Astrocyte of the spinal cord (primary cell): ENCODE measurements at regions of chr5 and their contacts with region 1.

Region 1: DNA sequence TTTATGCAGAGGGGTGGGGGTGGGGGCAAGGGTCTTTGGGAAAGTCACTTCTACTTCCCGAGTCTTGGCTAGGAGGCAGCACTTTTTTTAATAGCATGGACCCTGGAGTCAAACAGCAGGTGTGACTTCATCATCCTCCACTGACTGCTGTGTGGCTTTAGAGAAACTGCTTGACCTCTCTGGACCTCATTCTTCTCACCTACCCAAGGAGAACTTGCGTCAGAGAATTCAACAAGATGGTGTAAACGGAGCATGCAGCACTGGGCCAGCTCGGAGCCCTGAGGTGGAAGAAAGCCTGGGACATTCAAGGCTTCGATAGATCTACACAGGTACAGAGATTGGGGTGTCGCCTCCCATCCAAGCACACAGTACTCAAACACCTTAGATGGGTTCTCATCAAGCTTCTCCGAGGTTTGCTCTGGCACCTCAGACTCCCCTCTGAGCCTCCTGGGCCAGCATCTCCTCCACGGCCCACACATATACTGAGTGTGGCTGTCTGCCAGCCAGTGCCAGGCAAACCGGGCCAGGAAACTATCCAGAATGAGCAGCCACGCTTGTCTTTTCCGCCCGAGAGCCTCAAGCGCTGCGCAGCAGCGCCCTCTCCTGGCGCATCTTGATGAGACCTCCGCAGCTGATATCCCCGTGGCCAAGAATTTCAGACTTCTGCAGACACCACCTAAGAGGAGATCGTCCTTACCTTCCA is 4.6 kb upstream of the SLC25A48 start:
- DNase-seq: peak; percentile 55
- H3K4me3 ChIP-seq: no peak overlapping the region
- CTCF ChIP-seq: peak; percentile 89

Region 2: GRCh38 chr5:134864707-134865106 is 965.1 kb before region 1 on chr5:
- in situ Hi-C with region 1: no loop called
- DNase-seq: no peak
- H3K4me3 ChIP-seq: no peak overlapping the region
- CTCF ChIP-seq: no peak

Region 3: DNA sequence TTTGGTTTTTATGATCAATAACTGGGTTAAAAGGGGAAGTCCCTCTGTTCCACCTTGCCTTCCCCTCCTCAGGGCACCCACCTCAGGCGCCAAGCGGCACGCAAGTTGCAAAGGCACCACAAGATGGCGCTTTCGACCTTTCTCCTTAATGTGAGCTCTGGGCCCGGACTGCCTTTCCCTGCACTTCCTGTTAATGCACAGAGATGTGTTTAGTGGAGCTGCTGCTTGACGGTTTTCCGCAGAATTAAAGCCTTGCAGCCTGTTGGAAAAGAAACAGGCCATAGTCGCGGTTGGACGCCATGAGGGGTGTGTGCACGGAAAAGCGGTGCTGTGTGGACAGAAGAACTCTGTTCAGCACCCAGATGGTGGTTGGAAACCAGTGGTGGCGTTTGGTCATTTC is 269.0 kb before region 1 on chr5:
- in situ Hi-C with region 1: loop called (anchors 25 kb)
- DNase-seq: peak; percentile 68
- H3K4me3 ChIP-seq: no peak overlapping the region
- CTCF ChIP-seq: peak; percentile 90

Region 4: DNA sequence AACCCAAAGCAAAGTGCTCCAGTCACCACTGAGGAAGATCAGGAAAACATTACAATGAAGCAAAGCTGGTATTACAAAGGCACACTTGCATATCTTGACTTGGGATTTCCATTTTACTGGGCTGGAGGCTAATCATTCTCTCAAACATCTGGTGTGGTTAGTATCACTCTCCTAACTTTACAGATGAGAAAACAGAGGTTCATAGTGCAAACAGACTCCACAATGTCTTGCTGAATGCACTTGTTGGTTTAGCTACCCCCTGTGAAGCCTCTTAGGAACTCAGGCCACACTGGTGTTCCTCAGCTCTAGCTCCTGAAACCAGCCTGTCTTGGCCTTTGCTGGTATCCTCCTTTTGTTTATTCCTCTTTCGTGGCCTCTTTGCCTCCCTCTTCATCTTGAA is 273.3 kb after region 1 on chr5:
- in situ Hi-C with region 1: no loop called
- DNase-seq: no peak
- H3K4me3 ChIP-seq: no peak overlapping the region
- CTCF ChIP-seq: no peak

Region 5: GRCh38 chr5:136712705-136713104 is 882.9 kb after region 1 on chr5:
- in situ Hi-C with region 1: no loop called
- DNase-seq: no peak
- H3K4me3 ChIP-seq: no peak overlapping the region
- CTCF ChIP-seq: no peak